Endothelial cell of umbilical vein (primary cell): ENCODE measurements at regions of chr17 and their contacts with region 1.

Region 1: GRCh38 chr17:5706577-5707216 is 122.4 kb upstream of the NLRP1 start:
- DNase-seq: peak; percentile 68
- H3K4me3 ChIP-seq: no peak overlapping the region
- H3K27ac ChIP-seq: no peak overlapping the region
- H3K4me1 ChIP-seq: no peaks in the 10 kb centered on the region
- H3K27me3 ChIP-seq: peaks cover 0 to 5% of the 10 kb centered on the region in 2 experiments
- CTCF ChIP-seq: peak; percentile 72 to 81
- POLR2A ChIP-seq: no peak

Region 2: GRCh38 chr17:5644065-5644464 is 62.6 kb before region 1 on chr17:
- CTCF ChIA-PET with region 1: no interaction called
- POLR2A ChIA-PET with region 1: no interaction called
- dilution Hi-C with region 1: no loop called
- intact Hi-C with region 1: no loop called
- DNase-seq: no peak
- H3K4me3 ChIP-seq: no peak overlapping the region
- H3K27ac ChIP-seq: no peak overlapping the region
- H3K4me1 ChIP-seq: no peaks in the 10 kb centered on the region
- H3K27me3 ChIP-seq: no peaks in the 10 kb centered on the region
- CTCF ChIP-seq: no peak
- POLR2A ChIP-seq: no peak

Region 3: GRCh38 chr17:5694551-5694950 is 12.1 kb before region 1 on chr17:
- CTCF ChIA-PET with region 1: interaction called, 11 read pairs
- POLR2A ChIA-PET with region 1: no interaction called
- dilution Hi-C with region 1: no loop called
- intact Hi-C with region 1: no loop called
- DNase-seq: no peak
- H3K4me3 ChIP-seq: no peak overlapping the region
- H3K27ac ChIP-seq: no peak overlapping the region
- H3K4me1 ChIP-seq: no peaks in the 10 kb centered on the region
- H3K27me3 ChIP-seq: peaks cover 3% of the 10 kb centered on the region in 2 experiments
- CTCF ChIP-seq: no peak
- POLR2A ChIP-seq: no peak

Region 4: DNA sequence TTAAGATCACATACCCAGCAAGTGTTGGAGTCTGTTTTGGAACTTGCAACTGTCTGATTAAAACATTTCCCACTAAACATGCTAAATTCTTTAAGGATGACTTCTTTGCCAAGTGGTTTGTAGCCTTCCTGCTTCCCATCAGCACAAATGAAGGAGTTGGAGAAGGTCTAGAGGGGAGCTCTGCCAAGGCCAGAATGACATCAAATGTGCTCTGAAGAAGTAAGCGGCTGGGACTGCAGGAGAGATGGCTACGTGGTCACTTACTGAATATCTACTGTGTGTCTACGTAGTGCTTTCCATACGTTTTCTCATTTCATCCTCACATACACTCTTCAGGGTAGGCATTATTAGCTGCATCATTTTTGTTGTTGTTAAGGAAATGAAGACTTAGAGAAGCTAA is 13.3 kb after region 1 on chr17:
- CTCF ChIA-PET with region 1: interaction called, 19 read pairs
- POLR2A ChIA-PET with region 1: no interaction called
- dilution Hi-C with region 1: no loop called
- intact Hi-C with region 1: no loop called
- DNase-seq: no peak
- H3K4me3 ChIP-seq: no peak overlapping the region
- H3K27ac ChIP-seq: no peak overlapping the region
- H3K4me1 ChIP-seq: no peaks in the 10 kb centered on the region
- H3K27me3 ChIP-seq: no peaks in the 10 kb centered on the region
- CTCF ChIP-seq: no peak
- POLR2A ChIP-seq: no peak

Region 5: GRCh38 chr17:5975661-5976060 is 269.0 kb after region 1 on chr17:
- CTCF ChIA-PET with region 1: no interaction called
- POLR2A ChIA-PET with region 1: no interaction called
- dilution Hi-C with region 1: no loop called
- intact Hi-C with region 1: no loop called
- DNase-seq: no peak
- H3K4me3 ChIP-seq: no peak overlapping the region
- H3K27ac ChIP-seq: no peak overlapping the region
- H3K4me1 ChIP-seq: no peaks in the 10 kb centered on the region
- H3K27me3 ChIP-seq: peaks cover 2 to 11% of the 10 kb centered on the region in 2 experiments
- CTCF ChIP-seq: no peak
- POLR2A ChIP-seq: no peak

Region 6: DNA sequence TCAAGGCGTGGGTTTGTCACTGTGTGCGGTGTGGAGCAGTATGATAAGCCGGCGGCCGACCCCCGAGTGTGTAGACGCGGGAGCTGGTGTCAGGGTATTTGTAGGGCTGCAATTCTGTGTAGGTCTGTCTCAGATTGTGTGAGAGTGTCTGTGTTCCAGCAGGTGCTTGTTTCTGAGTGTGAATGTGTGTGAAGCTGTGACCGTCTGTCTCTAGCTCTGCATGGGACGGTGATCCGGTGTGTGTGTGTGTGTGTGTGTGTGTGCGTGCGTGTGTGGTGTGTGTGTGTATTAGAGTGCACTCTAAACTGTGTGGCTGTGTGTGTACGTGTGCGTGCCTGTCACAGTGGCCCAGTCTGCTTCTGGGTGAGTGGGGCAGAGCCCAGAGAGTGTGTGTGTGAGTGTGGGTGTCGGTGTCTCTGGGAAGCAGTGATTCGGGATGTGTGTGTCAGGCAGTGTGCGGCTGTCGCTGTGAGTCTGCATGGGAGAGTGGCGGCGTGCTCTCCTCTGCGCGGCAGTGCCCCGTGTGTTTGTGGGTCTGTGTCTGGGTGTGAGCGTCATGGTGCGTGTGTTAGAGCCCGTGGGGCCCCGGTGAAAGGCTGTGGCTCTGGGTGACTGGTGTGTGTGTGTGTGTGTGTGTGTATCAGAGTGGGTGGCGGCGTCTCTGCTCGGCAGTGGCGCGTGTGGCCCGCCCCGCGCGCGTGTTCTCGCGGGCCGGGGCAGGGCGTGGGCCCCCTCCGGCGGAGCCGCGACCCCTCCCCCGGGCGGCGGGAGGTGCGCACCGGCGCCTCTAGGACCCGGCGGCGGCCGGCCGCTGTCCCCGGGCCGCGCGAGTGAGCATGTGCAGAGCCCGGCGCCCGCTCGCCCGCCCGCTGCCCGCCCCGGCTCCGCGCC is 363.1 kb after region 1 on chr17 and contains the start of gene WSCD1:
- CTCF ChIA-PET with region 1: interaction called, 6 read pairs
- POLR2A ChIA-PET with region 1: no interaction called
- dilution Hi-C with region 1: no loop called
- intact Hi-C with region 1: loop called (anchors 1 kb)
- DNase-seq: peak; percentile 44
- H3K4me3 ChIP-seq: peak within 1 kb of the TSS; percentile 75 to 87 (median 86)
- H3K27ac ChIP-seq: peak within 1 kb of the TSS; percentile 46
- H3K4me1 ChIP-seq: peaks cover 14% of the 10 kb centered on the region
- H3K27me3 ChIP-seq: peaks cover 10 to 16% of the 10 kb centered on the region in 2 experiments
- CTCF ChIP-seq: no peak
- POLR2A ChIP-seq: no peak
- total RNA-seq, gene WSCD1: 45.7 and 49.4 TPM in 2 replicates

Region 7: DNA sequence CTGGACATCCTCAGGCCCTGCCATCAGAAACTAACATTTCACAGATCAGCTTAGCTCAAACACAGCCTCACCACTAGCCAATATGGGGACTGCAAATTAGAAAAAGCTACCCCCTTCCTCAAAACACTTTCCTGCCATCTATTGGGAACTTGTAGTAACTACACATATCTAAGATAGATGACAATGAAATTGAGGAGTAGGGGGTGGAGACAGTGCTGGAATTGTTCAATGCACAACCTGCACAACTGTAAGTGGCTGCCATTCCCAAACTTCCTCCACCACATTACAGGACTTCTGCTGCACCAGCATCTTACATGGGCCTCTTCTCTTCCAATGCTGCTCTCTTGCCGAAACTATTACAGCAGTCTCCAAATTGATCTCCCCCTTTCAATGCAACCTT is 706.4 kb after region 1 on chr17:
- CTCF ChIA-PET with region 1: interaction called, 29 read pairs
- POLR2A ChIA-PET with region 1: no interaction called
- dilution Hi-C with region 1: no loop called
- intact Hi-C with region 1: loop called (anchors 2 kb)
- DNase-seq: peak; percentile 67
- H3K4me3 ChIP-seq: no peak overlapping the region
- H3K27ac ChIP-seq: no peak overlapping the region
- H3K4me1 ChIP-seq: no peaks in the 10 kb centered on the region
- H3K27me3 ChIP-seq: no peaks in the 10 kb centered on the region
- CTCF ChIP-seq: peak; percentile 50 to 56
- POLR2A ChIP-seq: no peak

Region 8: DNA sequence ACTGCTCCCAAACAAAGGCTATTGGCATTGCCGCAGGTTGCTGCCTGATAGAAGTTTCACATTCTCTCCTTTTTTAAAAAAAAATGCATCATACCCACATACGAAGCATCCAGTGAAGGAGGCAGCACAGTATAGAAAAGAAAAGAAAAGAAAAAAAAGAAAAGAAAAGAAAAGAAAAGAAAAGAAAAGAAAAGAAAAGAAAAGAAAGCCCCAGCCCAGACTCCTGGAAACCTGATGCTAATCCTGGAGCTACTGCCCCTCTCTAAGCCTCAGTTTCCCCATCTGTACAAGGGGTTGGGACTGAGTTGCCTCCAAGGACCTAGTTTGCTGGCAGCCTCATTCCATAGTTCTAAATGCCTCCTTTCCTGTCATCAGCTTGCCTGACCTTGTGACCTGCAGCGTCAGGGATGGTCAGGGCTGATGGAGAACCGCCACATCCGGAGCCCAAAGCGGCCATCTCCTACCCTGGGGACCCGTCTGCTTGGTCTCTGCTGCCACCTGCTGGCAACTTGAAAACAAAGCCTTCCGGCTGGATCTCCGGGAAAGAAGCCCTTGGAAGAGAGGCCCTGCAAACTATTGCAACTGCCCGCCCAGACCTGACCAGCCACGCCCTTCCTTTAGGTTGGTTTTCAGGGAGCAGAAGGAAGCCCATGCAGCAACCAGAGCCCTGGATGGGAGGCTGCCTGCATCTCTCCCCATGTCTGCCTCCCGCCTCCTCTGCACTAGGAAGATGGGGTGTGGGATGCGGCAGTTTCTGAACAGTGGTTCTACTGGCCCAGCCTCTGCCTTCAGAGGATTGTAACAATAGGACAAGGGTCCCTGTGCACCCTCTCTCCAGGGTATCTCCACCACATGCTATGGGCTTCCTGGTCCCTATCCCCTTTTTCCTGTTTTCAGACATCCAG is 715.3 kb after region 1 on chr17:
- CTCF ChIA-PET with region 1: interaction called, 41 read pairs
- POLR2A ChIA-PET with region 1: no interaction called
- dilution Hi-C with region 1: no loop called
- intact Hi-C with region 1: loop called (anchors 2 kb)
- DNase-seq: peak; percentile 51
- H3K4me3 ChIP-seq: no peak overlapping the region
- H3K27ac ChIP-seq: no peak overlapping the region
- H3K4me1 ChIP-seq: no peaks in the 10 kb centered on the region
- H3K27me3 ChIP-seq: no peaks in the 10 kb centered on the region
- CTCF ChIP-seq: peak; percentile 80 to 81
- POLR2A ChIP-seq: no peak

Region 9: DNA sequence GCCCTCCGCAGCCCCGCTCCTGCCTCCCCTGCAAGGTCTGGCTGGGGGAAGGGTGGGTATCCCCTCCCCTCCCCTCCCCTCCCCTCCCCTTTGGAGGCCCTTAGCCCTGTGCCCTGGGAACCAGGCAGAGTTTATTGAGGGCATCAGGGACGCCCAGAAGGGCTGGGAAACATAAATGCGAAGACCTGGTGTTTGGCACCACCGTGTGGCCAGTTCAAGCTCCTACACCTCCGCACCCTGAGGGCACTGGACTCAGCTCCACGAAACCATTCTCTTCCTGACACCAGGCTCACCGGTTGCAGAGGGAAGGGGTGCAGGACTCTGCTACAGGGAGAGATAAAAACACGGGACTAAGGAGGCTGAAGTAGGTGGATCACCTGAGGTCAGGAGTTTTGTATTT is 729.3 kb after region 1 on chr17:
- CTCF ChIA-PET with region 1: interaction called, 11 read pairs
- POLR2A ChIA-PET with region 1: no interaction called
- dilution Hi-C with region 1: no loop called
- intact Hi-C with region 1: no loop called
- DNase-seq: peak; percentile 51
- H3K4me3 ChIP-seq: no peak overlapping the region
- H3K27ac ChIP-seq: no peak overlapping the region
- H3K4me1 ChIP-seq: no peaks in the 10 kb centered on the region
- H3K27me3 ChIP-seq: peaks cover 4 to 20% of the 10 kb centered on the region in 2 experiments
- CTCF ChIP-seq: peak; percentile 76 to 79
- POLR2A ChIP-seq: no peak